Calu3 (cell line): ENCODE measurements at regions of chr11 and their contacts with region 1.

Region 1: GRCh38 chr11:72209101-72209500 is 7.5 kb upstream of the FOLR2 start:
- DNase-seq: no peak
- H3K4me3 Mint-ChIP-seq: no peak overlapping the region
- H3K27ac Mint-ChIP-seq: no peak overlapping the region
- H3K4me1 Mint-ChIP-seq: no peaks in the 10 kb centered on the region
- H3K27me3 Mint-ChIP-seq: peaks cover 25% of the 10 kb centered on the region
- CTCF ChIP-seq: no peak

Region 2: DNA sequence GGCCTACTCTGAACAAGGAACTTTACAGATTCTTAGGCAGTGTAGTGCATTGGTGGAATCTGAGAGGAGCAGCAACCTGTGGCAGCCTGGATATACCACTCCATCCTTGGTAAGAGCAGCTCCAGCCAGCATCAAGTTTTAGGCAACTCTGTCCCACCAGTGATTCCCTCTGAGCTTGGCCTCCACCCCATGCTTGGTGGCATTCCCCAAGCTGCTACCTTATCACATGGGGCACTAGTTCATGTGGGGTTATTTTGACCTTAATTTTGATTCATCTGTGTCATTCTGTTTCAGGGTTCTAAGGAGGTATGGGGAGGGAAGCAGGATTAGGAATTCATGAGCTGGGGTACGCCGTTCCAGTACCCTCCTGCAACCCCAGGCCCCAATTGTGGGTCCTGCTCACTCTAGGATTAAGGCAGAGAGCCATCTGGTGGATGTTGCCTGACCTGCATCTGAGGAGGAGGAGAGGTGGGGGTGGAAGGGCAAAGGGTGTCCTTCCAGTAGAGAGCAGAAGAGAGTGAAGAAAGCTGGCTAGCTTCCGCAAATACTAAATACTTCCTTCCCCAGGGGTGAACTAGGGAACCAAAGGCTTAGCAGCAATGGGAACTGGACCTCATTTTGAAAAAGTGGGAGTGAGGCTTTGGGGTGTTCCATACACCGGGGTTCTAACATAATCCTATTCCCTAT is 118.0 kb before region 1 on chr11:
- CTCF ChIA-PET with region 1: interaction called, 10 read pairs
- intact Hi-C with region 1: no loop called
- DNase-seq: peak; percentile 70
- H3K4me3 Mint-ChIP-seq: no peak overlapping the region
- H3K27ac Mint-ChIP-seq: no peak overlapping the region
- H3K4me1 Mint-ChIP-seq: peaks cover 10% of the 10 kb centered on the region
- H3K27me3 Mint-ChIP-seq: no peaks in the 10 kb centered on the region
- CTCF ChIP-seq: peak; percentile 76